Posterior cingulate gyrus (tissue), 11 donors: ENCODE measurements at regions of chr2 and their contacts with region 1.

Region 1: GRCh38 chr2:108786354-108787199 is at the start of gene CCDC138:
- DNase-seq: peak; percentile 72 to 98 (median 84)

Region 2: DNA sequence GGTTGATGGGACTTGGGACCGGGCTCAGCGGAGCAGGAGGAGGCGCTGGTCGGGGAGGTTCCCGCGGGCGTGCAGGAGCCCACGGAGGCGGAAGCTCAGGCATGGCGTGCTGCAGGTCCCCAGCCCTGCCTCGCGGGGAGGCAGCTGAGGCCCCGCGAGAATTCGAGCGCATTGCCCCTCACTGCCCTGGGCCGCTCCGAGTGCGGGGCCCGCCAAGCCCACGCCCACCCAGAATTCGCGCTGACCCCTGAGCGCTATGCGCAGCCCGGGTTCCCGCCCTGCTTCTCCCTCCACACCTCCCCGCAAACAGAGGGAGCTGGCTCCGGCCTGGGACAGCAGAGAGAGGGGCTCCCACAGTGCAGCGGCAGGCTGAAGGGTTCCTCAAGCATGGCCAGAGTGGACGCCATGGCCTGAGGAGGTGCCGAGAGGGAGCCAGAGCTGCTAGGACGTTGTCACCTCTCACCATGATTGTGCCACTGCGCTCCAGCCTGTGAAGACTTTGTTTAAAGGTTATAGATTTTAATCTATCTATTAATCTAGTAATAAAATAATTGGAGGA is 1317.1 kb before region 1 on chr2:
- intact Hi-C with region 1: no loop called
- DNase-seq: peak in 1 of 10 donors; percentile 55

Region 3: GRCh38 chr2:108403494-108403893 is 383.1 kb before region 1 on chr2:
- intact Hi-C with region 1: no loop called
- DNase-seq: no peak

Region 4: DNA sequence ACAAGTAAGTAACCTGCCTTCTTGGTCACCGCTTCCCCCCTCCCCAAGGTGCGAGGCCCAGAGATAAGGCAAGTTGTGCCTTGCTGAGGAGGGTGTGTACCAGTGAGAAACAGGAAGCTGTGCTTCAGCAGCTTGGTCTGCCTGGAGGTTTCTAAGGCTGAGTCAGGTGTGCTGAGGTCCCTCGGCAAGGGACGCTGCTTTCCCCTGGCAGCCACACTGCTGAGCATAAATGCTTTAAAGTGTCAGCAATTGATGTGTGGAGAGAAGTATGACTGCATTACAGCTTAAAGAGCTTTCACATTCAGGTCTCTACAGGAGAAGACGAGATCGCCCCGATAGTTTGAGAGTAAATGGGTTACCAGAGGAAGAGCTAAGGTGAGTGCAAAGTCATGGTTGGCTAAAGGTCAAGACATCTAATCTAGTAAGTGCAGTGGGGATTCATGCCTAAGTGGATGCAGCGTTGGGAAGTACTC is 165.5 kb before region 1 on chr2:
- intact Hi-C with region 1: loop called (anchors 5 kb)
- DNase-seq: no peak

Region 5: DNA sequence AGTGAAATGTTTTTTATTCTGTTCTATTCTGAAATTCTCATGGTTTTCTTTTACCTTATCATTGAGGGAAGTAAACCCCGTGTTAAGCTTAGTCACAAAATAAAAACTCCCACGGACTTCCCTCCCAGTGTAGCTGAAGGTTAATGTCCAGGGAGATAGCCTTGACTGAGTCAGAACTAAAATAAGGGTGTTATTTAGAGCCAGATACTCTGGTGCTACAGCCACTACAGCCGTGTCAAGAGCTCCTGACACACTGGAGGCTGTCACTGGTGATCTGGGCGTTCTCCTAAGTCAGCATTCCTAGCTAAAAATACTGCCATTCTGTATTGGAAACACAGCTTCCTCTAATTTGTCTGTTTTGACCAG is 149.3 kb before region 1 on chr2:
- intact Hi-C with region 1: no loop called
- DNase-seq: peak in 1 of 10 donors; percentile 48

Region 6: GRCh38 chr2:109045505-109045904 is 258.9 kb after region 1 on chr2:
- intact Hi-C with region 1: no loop called
- DNase-seq: no peak